Naive thymus-derived CD4-positive, alpha-beta T cell (primary cell): ENCODE measurements at regions of chr9 and their contacts with region 1.

Region 1: GRCh38 chr9:89428901-89429890 is 68.7 kb downstream of the SEMA4D start:
- DNase-seq: peak in 7 of 9 donors; percentile 68 to 83 (median 77)
- ATAC-seq: peak; percentile 76
- H3K4me3 ChIP-seq: no peak overlapping the region
- H3K4me3 Mint-ChIP-seq: peak overlapping the region in 9 of 10 donors; percentile 38 to 78 (median 63)
- H3K27ac ChIP-seq: peak overlapping the region; percentile 63
- H3K27ac Mint-ChIP-seq: peak overlapping the region; percentile 84 to 97 (median 92)
- H3K4me1 ChIP-seq: peaks cover 81 to 84% of the 10 kb centered on the region in 2 donors
- H3K4me1 Mint-ChIP-seq: peaks cover 67 to 100% (median 95%) of the 10 kb centered on the region in 7 donors
- H3K27me3 ChIP-seq: no peaks in the 10 kb centered on the region
- H3K27me3 Mint-ChIP-seq: no peaks in the 10 kb centered on the region

Region 2: DNA sequence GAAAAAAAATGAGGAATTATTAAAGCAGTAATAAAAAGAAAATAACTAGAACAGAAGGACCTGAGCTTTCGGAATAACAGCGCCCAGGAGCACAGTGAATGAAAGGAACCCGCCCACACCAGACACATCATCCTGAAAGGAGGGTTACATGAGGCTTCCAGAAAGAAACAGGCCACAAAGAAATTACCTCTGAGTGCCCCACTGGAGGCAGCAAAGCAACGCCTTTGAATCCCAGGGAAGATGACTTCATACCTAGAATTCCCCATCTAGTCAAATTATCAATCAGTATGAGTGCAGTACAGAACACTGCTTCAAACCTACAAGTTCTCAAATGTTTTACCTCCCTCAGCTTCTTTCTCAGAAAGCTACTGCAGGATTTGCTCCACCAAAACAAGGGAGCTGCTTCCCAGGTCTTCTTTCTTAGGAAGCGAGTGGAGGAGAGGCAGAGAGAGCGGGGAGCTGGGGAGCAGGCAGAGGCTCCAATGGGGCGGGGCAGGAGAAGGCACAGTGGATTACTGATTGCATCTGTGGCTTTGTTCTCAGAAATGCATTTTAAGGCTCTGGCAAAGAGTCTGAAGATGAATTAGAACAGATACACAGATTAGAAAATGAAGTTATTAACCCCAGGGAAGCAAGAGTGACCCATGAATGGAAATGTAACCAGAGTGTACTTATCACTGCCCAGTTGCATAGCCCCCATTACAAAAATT is 18.4 kb before region 1 on chr9:
- CTCF ChIA-PET with region 1: interaction called, 3 read pairs
- POLR2A ChIA-PET with region 1: interaction called, 18 read pairs
- intact Hi-C with region 1: loop called in 1 of 2 experiments (anchors 1 kb)
- DNase-seq: peak in 2 of 9 donors; percentile 29 to 60
- ATAC-seq: peak; percentile 37
- H3K4me3 ChIP-seq: no peak overlapping the region
- H3K4me3 Mint-ChIP-seq: peak overlapping the region in 9 of 10 donors; percentile 7 to 85 (median 54)
- H3K27ac ChIP-seq: peak overlapping the region; percentile 20
- H3K27ac Mint-ChIP-seq: peak overlapping the region; percentile 67 to 93 (median 84)
- H3K4me1 ChIP-seq: peaks cover 57 to 62% of the 10 kb centered on the region in 2 donors
- H3K4me1 Mint-ChIP-seq: peaks cover 56 to 100% (median 93%) of the 10 kb centered on the region in 7 donors
- H3K27me3 ChIP-seq: no peaks in the 10 kb centered on the region
- H3K27me3 Mint-ChIP-seq: no peaks in the 10 kb centered on the region

Region 3: GRCh38 chr9:89442981-89443814 is 14.0 kb after region 1 on chr9:
- CTCF ChIA-PET with region 1: interaction called, 7 read pairs
- POLR2A ChIA-PET with region 1: interaction called, 7 read pairs
- intact Hi-C with region 1: loop called in 1 of 2 experiments (anchors 2 kb)
- DNase-seq: no peak
- ATAC-seq: peak; percentile 36
- H3K4me3 ChIP-seq: no peak overlapping the region
- H3K4me3 Mint-ChIP-seq: peak overlapping the region in 3 of 10 donors; percentile 54 to 82 (median 67)
- H3K27ac ChIP-seq: peak overlapping the region; percentile 72
- H3K27ac Mint-ChIP-seq: peak overlapping the region; percentile 76 to 99 (median 96)
- H3K4me1 ChIP-seq: peaks cover 84 to 89% of the 10 kb centered on the region in 2 donors
- H3K4me1 Mint-ChIP-seq: peaks cover 62 to 91% (median 85%) of the 10 kb centered on the region in 7 donors
- H3K27me3 ChIP-seq: no peaks in the 10 kb centered on the region
- H3K27me3 Mint-ChIP-seq: no peaks in the 10 kb centered on the region

Region 4: GRCh38 chr9:89477811-89478630 is 48.8 kb after region 1 on chr9:
- CTCF ChIA-PET with region 1: interaction called, 12 read pairs
- POLR2A ChIA-PET with region 1: interaction called, 4 read pairs
- intact Hi-C with region 1: no loop called
- DNase-seq: peak in 8 of 9 donors; percentile 49 to 78 (median 66)
- ATAC-seq: peak; percentile 63
- H3K4me3 ChIP-seq: peak overlapping the region; percentile 49
- H3K4me3 Mint-ChIP-seq: peak overlapping the region; percentile 80 to 92 (median 87)
- H3K27ac ChIP-seq: peak overlapping the region; percentile 78
- H3K27ac Mint-ChIP-seq: peak overlapping the region; percentile 90 to 99 (median 95)
- H3K4me1 ChIP-seq: peaks cover 74 to 82% of the 10 kb centered on the region in 2 donors
- H3K4me1 Mint-ChIP-seq: peaks cover 76 to 96% (median 90%) of the 10 kb centered on the region in 7 donors
- H3K27me3 ChIP-seq: no peaks in the 10 kb centered on the region
- H3K27me3 Mint-ChIP-seq: no peaks in the 10 kb centered on the region

Region 5: GRCh38 chr9:89483592-89484522 is 54.7 kb after region 1 on chr9:
- CTCF ChIA-PET with region 1: interaction called, 12 read pairs
- POLR2A ChIA-PET with region 1: interaction called, 8 read pairs
- intact Hi-C with region 1: loop called in 1 of 2 experiments (anchors 1 kb)
- DNase-seq: peak; percentile 41 to 76 (median 66)
- ATAC-seq: peak; percentile 84
- H3K4me3 ChIP-seq: peak overlapping the region; percentile 48
- H3K4me3 Mint-ChIP-seq: peak overlapping the region; percentile 85 to 100 (median 90)
- H3K27ac ChIP-seq: peak overlapping the region; percentile 68
- H3K27ac Mint-ChIP-seq: peak overlapping the region; percentile 88 to 99 (median 93)
- H3K4me1 ChIP-seq: peaks cover 67 to 71% of the 10 kb centered on the region in 2 donors
- H3K4me1 Mint-ChIP-seq: peaks cover 70 to 96% (median 90%) of the 10 kb centered on the region in 7 donors
- H3K27me3 ChIP-seq: no peaks in the 10 kb centered on the region
- H3K27me3 Mint-ChIP-seq: no peaks in the 10 kb centered on the region

Region 6: DNA sequence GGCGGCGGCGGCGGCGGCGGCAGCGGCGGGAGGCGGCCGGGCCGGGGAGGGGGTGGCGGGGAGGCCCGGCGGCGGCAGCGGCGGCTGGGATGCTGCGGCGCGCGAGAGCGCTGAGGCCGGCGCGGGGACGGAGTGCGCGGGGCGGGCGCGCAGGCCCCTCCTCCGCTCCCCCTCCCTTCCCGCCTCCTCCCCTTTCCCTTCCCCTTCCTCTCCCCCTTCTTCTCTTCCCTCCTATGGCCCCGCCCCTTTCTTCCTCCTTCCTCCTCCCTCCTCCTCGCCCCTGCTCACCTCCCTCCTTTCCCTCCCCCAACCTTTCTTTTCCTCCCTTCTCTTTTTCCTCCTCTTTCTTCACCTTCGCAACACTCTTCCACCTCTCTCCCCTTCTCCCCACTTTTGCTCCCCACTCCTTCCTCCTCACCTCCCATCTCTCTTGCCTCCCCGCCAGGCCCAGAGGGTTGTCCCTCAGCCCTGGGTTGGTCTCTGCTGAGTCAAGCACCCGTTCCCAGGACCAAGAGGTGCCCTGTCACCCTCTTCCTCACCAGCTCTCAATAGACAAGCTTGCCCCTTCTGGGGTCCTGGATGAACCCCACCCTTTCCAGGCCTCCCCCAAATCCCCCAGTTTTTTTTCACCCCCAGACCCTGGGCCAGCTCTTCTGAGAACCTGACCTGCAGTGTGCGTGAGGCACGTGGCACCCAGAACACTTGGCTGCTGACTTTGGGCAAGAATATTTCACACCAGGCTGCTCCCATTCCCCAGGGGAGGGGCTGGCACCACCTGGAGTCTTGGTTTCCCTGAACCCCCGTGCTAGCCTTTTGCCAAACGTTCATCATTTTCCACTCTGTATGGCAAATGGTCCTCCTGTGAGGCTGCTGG is 69.0 kb after region 1 on chr9 and contains the start of gene SEMA4D:
- CTCF ChIA-PET with region 1: interaction called, 6 read pairs
- POLR2A ChIA-PET with region 1: interaction called, 4 read pairs
- intact Hi-C with region 1: loop called in 1 of 2 experiments (anchors 1 kb)
- DNase-seq: peak in 2 of 9 donors; percentile 48 to 71
- ATAC-seq: peak; percentile 22
- H3K4me3 ChIP-seq: peak within 1 kb of the TSS; percentile 67
- H3K4me3 Mint-ChIP-seq: peak within 1 kb of the TSS; percentile 85 to 100 (median 98)
- H3K27ac ChIP-seq: peak within 1 kb of the TSS; percentile 76
- H3K27ac Mint-ChIP-seq: peak within 1 kb of the TSS; percentile 86 to 99 (median 94)
- H3K4me1 ChIP-seq: peaks cover 72 to 75% of the 10 kb centered on the region in 2 donors
- H3K4me1 Mint-ChIP-seq: peaks cover 72 to 90% (median 77%) of the 10 kb centered on the region in 7 donors
- H3K27me3 ChIP-seq: no peaks in the 10 kb centered on the region
- H3K27me3 Mint-ChIP-seq: no peaks in the 10 kb centered on the region
- total RNA-seq, gene SEMA4D: 389 to 465 (median 460) TPM